ENCODE measurements at regions of chr6 and their contacts with region 1.

Region 1: GRCh38 chr6:116444092-116444491 is 17.1 kb upstream of the CALHM6 start:
- DNase-seq: peak; percentile 32 to 61 (median 59)
- H3K4me3 ChIP-seq: no peak overlapping the region
- H3K27ac ChIP-seq: no peak overlapping the region
- H3K4me1 ChIP-seq: peaks cover 13 to 43% (median 24%) of the 10 kb centered on the region in 4 experiments
- H3K27me3 ChIP-seq: no peaks in the 10 kb centered on the region

Region 2: GRCh38 chr6:116253505-116254296 is 190.4 kb before region 1 on chr6 and contains the start of gene TSPYL4:
- CTCF ChIA-PET with region 1: no interaction called
- POLR2A ChIA-PET with region 1: no interaction called
- DNase-seq: peak; percentile 96 to 99 (median 98)
- H3K4me3 ChIP-seq: peak within 1 kb of the TSS; percentile 71 to 99 (median 94)
- H3K27ac ChIP-seq: peak within 1 kb of the TSS; percentile 99
- H3K4me1 ChIP-seq: peaks cover 20 to 43% (median 31%) of the 10 kb centered on the region in 4 experiments
- H3K27me3 ChIP-seq: no peaks in the 10 kb centered on the region

Region 3: DNA sequence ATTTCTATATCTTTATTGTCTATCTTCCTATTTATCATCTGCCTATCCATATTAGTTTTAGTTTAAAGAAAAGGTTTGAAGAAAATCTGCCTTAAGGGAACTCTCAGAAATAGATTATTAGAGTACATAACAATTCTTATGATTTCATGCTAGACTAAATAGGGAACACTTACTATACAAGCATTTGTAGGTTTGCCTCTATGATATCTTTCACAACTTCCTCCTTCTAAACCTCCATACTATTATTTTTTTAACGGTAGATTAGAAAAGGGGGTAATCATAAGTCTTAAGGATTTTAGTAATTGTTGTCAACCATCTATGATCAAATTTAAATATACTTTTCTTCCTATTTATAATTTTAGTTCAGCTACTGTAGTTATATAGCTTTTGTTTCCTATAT is 85.0 kb before region 1 on chr6:
- CTCF ChIA-PET with region 1: no interaction called
- POLR2A ChIA-PET with region 1: no interaction called
- DNase-seq: no peak
- H3K4me3 ChIP-seq: no peak overlapping the region
- H3K27ac ChIP-seq: no peak overlapping the region
- H3K4me1 ChIP-seq: peaks cover 0 to 7% (median 3%) of the 10 kb centered on the region in 4 experiments
- H3K27me3 ChIP-seq: no peaks in the 10 kb centered on the region

Region 4: DNA sequence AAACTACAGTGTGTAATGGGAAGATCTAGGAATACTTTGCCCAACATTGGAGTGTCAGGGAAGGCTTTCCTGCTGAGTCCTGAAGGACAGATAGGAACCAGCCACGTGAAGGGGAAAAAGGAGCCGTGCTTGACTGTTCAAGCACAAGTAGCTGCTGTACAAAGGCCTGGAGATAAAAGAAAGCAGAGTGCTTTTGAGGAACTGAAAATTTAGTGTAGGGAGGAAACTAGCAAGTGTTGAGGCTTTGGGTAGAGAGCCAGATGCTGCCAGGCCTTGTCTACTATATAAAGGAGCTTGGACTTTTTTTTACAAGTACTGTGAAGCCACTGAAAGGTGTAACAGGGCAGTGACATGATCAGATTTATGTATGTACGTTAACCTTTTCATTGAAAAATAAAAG is 34.3 kb before region 1 on chr6:
- CTCF ChIA-PET with region 1: interaction called, 17 read pairs
- POLR2A ChIA-PET with region 1: interaction called, 4 read pairs
- DNase-seq: peak in 2 of 3 donors; percentile 63 to 75
- H3K4me3 ChIP-seq: no peak overlapping the region
- H3K27ac ChIP-seq: no peak overlapping the region
- H3K4me1 ChIP-seq: peaks cover 19 to 47% (median 39%) of the 10 kb centered on the region in 4 experiments
- H3K27me3 ChIP-seq: no peaks in the 10 kb centered on the region

Region 5: GRCh38 chr6:116616737-116617053 is 172.6 kb after region 1 on chr6:
- CTCF ChIA-PET with region 1: no interaction called
- POLR2A ChIA-PET with region 1: no interaction called
- DNase-seq: no peak
- H3K4me3 ChIP-seq: peak overlapping the region; percentile 46 to 98 (median 77)
- H3K27ac ChIP-seq: peak overlapping the region; percentile 20 to 30
- H3K4me1 ChIP-seq: peaks cover 0 to 16% (median 13%) of the 10 kb centered on the region in 4 experiments
- H3K27me3 ChIP-seq: peaks cover 0 to 5% (median 2%) of the 10 kb centered on the region in 5 experiments

Region 6: GRCh38 chr6:117138920-117139319 is 694.8 kb after region 1 on chr6:
- CTCF ChIA-PET with region 1: no interaction called
- POLR2A ChIA-PET with region 1: no interaction called
- DNase-seq: no peak
- H3K4me3 ChIP-seq: no peak overlapping the region
- H3K27ac ChIP-seq: no peak overlapping the region
- H3K4me1 ChIP-seq: no peaks in the 10 kb centered on the region
- H3K27me3 ChIP-seq: no peaks in the 10 kb centered on the region

Measured in common myeloid progenitor, CD34-positive (primary cell).